Cardiac septum (tissue), 1 donor: ENCODE measurements at regions of chr7 and their contacts with region 1.

Region 1: GRCh38 chr7:127253281-127254162 is 781 bp upstream of the GRM8 start:
- DNase-seq: peak; percentile 77

Region 2: GRCh38 chr7:126803060-126803665 is 450.4 kb before region 1 on chr7:
- intact Hi-C with region 1: loop called (anchors 5 kb)
- DNase-seq: no peak

Region 3: GRCh38 chr7:127035203-127035849 is 218.2 kb before region 1 on chr7:
- intact Hi-C with region 1: no loop called
- DNase-seq: no peak

Region 4: GRCh38 chr7:127107601-127108007 is 145.9 kb before region 1 on chr7:
- intact Hi-C with region 1: loop called (anchors 5 kb)
- DNase-seq: no peak

Region 5: GRCh38 chr7:127194571-127194970 is 59.0 kb before region 1 on chr7:
- intact Hi-C with region 1: no loop called
- DNase-seq: no peak